ENCODE measurements at regions of chr5 and their contacts with region 1.

Region 1: DNA sequence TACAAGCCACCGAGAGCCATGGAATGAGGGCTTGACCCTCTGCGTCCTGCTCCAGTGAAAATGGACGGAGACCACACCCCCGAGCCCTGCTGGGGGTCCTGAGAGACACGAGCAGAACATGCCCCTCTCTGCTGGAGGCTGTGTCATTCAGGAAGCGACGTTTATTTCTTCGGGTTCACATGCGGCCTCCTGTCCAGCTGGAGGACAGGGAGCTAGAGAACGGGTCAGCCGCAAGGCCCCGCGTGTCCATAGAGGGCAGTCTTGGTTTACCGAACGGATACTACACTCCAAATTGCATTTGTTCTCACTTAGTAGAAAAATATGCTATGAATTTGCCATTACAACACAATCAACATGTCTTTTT is 36.1 kb downstream of the MRPL36 start:
- DNase-seq: peak; percentile 83
- CTCF ChIP-seq: peak; percentile 65

Region 2: DNA sequence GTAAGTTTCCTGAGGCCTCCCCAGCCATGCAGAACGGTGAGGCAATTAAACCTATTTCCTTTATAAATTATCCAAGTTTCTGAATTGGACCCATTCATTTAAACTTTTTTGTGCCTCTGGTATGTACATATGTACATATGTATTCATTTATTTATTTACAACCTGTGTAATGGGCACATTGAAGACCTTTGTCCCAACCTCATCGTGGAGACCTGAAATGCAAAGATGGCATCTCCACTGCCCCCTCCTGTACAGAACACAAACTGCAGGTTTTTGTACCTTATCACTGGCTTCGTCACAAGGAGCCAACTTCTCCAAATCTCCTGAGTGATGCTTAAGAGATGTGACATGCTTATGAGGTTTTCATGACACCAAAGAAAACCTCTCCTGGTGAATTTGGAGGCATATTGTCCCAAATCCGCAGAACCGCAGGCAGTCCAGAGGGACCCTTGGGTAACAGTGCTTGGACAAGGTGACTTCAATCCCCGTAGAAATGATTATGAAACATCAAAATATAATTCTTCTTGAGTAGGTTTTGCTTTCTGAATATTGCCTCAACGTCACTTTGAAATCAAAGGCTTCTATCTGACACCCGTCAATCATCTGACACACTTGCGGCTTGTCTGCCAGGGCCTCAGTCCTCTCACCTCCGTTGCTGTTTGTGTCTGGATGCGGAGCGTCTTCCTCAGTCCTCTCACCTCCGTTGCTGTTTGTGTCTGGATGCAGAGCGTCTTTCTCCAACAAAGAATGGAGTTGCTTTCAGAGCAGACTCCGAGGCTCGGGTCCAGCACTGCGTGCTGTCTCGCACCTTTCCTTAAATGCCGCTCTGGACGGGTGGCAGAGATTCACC is 254.2 kb after region 1 on chr5:
- in situ Hi-C with region 1: loop called (anchors 25 kb)
- DNase-seq: peak; percentile 63
- CTCF ChIP-seq: peak; percentile 64

Measured in GM13977 (cell line).